Activated CD8-positive, alpha-beta T cell treated with anti-CD3 and anti-CD28 coated beads, Interleukin-2, amount 10 ng/mL, durations not matched to agents 7 days and 5 days (primary cell): ENCODE measurements at regions of chr2 and their contacts with region 1.

Region 1: DNA sequence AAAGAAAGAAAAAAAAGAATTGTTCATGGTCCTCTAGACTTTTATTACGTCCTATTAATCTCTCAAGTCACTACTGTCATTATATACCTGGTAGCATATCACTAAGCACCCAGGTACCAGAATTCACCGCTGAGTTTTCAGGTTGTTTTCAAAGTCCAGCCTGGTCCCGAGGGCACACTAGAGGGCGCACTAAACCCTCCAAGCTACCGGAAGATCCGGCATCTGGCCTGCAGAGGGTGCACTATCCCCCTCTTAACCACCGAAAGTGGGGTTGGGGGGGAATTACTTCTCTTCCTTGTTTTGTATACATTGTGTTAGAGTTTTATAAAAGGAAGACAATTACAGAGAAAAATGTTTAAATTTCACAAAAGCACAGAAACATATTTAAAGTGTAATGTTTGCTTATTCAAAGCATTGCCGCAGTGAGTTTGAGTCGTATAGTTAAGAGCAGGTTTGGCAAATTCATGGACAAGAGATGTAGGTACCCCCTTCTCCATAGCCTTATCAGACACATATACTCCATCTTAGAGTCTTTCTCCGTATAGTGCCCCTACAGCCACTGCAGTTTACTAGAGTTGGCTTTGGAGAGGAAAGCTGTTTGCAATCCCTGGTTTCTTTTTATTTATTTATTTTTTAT is 19.2 kb downstream of the MOGAT1 start:
- DNase-seq: peak; percentile 87
- ATAC-seq: peak; percentile 93
- H3K4me3 Mint-ChIP-seq: no peak overlapping the region
- H3K27ac Mint-ChIP-seq: no peak overlapping the region
- H3K4me1 Mint-ChIP-seq: peaks cover 17% of the 10 kb centered on the region
- H3K27me3 Mint-ChIP-seq: peaks cover 28% of the 10 kb centered on the region

Region 2: DNA sequence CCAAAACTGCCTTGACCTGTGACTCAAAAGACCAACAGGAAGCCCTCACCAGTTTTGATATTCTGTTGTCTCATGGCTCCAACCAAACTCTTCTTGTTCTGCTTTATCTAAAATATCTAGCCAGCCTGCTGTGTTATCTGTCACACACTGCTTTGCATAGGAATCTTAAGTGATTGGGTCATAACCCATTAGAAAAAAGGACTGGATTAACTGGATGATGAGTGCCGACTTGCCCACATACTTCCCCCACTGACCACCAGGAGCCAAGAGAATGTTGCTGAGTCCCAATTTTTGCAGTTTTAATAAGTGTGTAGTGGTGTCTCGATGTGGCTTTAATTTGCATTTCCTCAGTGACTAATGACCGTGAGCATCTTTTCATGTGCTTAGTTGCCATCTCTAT is 12.7 kb before region 1 on chr2:
- CTCF ChIA-PET with region 1: interaction called, 14 read pairs
- POLR2A ChIA-PET with region 1: interaction called, 3 read pairs
- DNase-seq: no peak
- ATAC-seq: no peak
- H3K4me3 Mint-ChIP-seq: no peak overlapping the region
- H3K27ac Mint-ChIP-seq: no peak overlapping the region
- H3K4me1 Mint-ChIP-seq: no peaks in the 10 kb centered on the region
- H3K27me3 Mint-ChIP-seq: peaks cover 48% of the 10 kb centered on the region

Region 3: GRCh38 chr2:222738809-222739208 is 48.1 kb after region 1 on chr2:
- CTCF ChIA-PET with region 1: no interaction called
- POLR2A ChIA-PET with region 1: no interaction called
- DNase-seq: peak; percentile 29
- ATAC-seq: no peak
- H3K4me3 Mint-ChIP-seq: no peak overlapping the region
- H3K27ac Mint-ChIP-seq: no peak overlapping the region
- H3K4me1 Mint-ChIP-seq: peaks cover 17% of the 10 kb centered on the region
- H3K27me3 Mint-ChIP-seq: peaks cover 20% of the 10 kb centered on the region

Region 4: GRCh38 chr2:222844323-222844722 is 153.6 kb after region 1 on chr2:
- CTCF ChIA-PET with region 1: no interaction called
- POLR2A ChIA-PET with region 1: no interaction called
- DNase-seq: no peak
- ATAC-seq: no peak
- H3K4me3 Mint-ChIP-seq: no peak overlapping the region
- H3K27ac Mint-ChIP-seq: no peak overlapping the region
- H3K4me1 Mint-ChIP-seq: peaks cover 18% of the 10 kb centered on the region
- H3K27me3 Mint-ChIP-seq: peaks cover 11% of the 10 kb centered on the region

Region 5: DNA sequence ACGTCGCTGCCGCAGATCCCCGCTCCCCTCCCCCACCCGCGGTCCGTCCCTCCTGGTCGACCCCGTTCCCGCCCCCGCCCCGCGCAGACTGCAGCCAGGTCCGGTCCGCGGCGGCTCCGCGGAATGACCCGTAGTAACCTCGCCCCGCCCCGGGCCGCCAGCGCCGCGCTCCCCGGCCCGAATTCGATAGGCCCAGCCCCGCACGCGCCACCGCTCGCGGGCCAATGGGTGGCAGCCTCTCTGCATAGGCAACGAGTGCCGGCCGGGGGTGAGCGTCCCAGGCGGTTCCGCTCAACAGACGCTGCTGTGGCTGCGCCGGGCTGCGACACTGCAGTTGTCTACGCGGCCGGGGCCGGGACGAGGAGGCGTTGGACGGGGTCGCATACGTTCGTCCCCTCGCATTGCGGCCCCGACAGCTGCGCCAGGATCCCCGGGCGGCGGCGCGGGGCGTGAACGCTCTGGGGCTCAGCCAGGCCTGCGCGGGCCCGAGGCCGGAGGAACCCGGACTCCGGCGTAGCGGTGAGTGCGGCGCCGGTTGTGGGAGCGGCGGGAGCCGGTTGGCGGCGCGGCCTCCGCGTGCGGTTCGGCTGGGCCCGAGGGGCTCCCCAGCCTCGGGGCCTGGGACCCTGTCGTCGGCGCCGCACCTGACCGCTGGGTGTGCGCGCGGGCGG is 170.2 kb after region 1 on chr2 and contains the start of gene ACSL3:
- CTCF ChIA-PET with region 1: interaction called, 10 read pairs
- POLR2A ChIA-PET with region 1: no interaction called
- DNase-seq: peak; percentile 95
- ATAC-seq: peak; percentile 99
- H3K4me3 Mint-ChIP-seq: peak within 1 kb of the TSS; percentile 73
- H3K27ac Mint-ChIP-seq: peak within 1 kb of the TSS; percentile 90
- H3K4me1 Mint-ChIP-seq: peaks cover 6% of the 10 kb centered on the region
- H3K27me3 Mint-ChIP-seq: peaks cover 16% of the 10 kb centered on the region
- total RNA-seq, gene ACSL3: 46.5 to 54.6 TPM

Region 6: GRCh38 chr2:222903234-222904220 is 212.8 kb after region 1 on chr2:
- CTCF ChIA-PET with region 1: interaction called, 13 read pairs
- POLR2A ChIA-PET with region 1: no interaction called
- DNase-seq: peak; percentile 54
- ATAC-seq: peak; percentile 76
- H3K4me3 Mint-ChIP-seq: no peak overlapping the region
- H3K27ac Mint-ChIP-seq: no peak overlapping the region
- H3K4me1 Mint-ChIP-seq: peaks cover 11% of the 10 kb centered on the region
- H3K27me3 Mint-ChIP-seq: no peaks in the 10 kb centered on the region

Region 7: DNA sequence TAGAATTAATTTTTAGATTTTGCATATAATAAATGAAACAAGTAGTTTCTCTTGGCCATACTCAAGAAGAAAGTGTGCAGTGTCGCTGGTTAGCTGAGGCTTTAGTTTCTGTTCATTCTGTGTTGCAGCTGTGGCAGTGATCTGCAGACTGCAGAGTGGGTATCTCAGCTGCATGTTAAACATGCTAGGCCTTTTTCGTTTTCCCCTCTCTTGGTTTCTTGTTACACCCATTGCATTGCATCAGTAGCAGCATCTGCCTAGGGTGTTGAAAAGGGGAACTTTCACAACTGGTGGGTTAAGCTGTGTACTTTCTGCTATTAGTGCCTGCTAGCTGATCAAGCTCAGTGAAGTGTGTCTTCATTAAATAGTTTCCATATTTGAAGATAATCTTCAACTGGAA is 221.4 kb after region 1 on chr2:
- CTCF ChIA-PET with region 1: interaction called, 10 read pairs
- POLR2A ChIA-PET with region 1: no interaction called
- DNase-seq: no peak
- ATAC-seq: no peak
- H3K4me3 Mint-ChIP-seq: no peak overlapping the region
- H3K27ac Mint-ChIP-seq: no peak overlapping the region
- H3K4me1 Mint-ChIP-seq: peaks cover 27% of the 10 kb centered on the region
- H3K27me3 Mint-ChIP-seq: no peaks in the 10 kb centered on the region

Region 8: DNA sequence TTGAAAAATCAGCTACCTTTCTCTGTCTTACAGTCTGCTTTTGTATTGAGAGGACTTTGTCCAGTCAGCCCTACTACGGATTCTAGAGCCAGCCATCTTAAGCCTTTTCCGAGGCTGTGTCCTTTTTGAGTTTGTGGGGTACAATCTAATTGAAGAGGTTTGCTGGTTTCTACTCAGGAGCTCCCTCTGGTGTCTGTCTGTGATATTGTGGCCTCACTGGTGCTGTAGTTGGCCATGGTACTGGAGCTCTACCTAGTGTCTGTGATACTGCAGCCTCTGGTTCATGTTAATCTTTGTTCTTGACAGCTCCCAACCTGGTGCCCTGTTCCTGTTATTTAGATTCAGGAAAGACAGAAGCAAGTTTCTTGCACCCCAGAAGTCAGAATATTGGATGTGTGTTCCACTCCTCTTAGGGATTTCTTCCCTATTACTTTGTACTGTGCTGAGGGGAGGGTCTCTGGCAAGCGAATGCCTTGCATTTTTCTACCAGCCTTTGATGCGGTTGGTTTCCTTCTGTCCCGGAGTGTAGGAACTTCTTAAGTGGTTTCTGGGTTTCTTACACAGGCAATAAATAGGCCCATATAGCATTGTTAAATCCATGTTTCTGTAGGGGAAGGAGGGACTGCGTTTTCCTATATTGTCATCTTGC is 248.7 kb after region 1 on chr2:
- CTCF ChIA-PET with region 1: interaction called, 28 read pairs
- POLR2A ChIA-PET with region 1: no interaction called
- DNase-seq: peak; percentile 81
- ATAC-seq: peak; percentile 96
- H3K4me3 Mint-ChIP-seq: no peak overlapping the region
- H3K27ac Mint-ChIP-seq: no peak overlapping the region
- H3K4me1 Mint-ChIP-seq: peaks cover 5% of the 10 kb centered on the region
- H3K27me3 Mint-ChIP-seq: no peaks in the 10 kb centered on the region